PC-3 (cell line): ENCODE measurements at regions of chr6 and their contacts with region 1.

Region 1: DNA sequence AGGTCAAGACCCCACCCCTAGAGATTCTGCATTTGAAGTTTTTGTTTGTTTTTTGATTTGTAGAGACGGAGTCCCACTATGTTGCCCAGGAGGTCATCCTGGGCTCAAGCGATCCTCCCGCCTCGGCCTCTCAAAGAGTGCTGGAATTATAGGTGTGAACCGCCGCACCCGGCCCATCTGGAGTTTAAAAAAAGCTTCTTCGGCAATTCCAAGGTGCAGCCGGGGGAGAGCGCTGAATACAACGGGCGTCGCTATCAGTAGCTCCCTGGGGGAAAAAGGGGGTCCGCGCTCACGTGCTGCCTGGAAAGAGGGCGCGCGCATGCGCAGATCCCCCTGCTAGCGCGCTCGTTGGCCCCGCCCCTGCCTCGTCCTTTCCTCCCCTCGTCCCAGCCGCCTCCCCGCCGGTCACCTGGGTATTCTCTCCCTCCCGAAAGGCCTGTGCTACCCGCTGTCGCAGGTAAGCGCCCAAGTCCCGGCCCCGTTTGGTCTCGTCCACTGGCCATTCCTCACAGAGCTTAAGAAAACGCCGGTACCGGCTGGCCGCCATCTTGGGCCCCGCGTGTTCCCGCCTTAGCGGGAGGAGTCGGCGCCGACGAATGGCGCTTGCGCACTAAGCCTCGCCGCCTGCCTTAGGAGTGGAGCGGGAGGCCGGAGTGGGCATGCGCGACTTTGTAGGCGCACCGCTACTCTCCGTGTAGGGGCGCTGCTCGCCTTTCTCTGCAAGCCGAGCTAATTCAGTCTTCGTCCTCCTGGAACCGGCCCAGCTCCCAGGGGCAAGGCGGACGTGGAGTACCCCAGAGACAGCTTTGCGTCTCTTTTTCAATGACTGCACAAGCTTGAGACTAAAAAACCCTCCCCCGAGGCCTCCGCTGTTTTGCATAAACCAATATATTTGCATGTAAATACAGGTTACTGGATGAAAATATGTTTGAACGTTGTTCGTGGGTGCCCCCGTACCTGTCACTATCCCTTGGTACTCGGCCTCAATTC is at the start of gene UQCC2:
- DNase-seq: peak; percentile 98
- ATAC-seq: peak; percentile 93
- H3K4me3 ChIP-seq: peak within 1 kb of the TSS; percentile 86
- H3K27ac ChIP-seq: peak within 1 kb of the TSS; percentile 90
- H3K4me1 ChIP-seq: peaks cover 24% of the 10 kb centered on the region
- H3K27me3 ChIP-seq: no peaks in the 10 kb centered on the region
- CTCF ChIP-seq: peak; percentile 79
- total RNA-seq, gene UQCC2: 70.0 and 107 TPM in 2 replicates

Region 2: GRCh38 chr6:32668226-32668747 is 1043.1 kb before region 1 on chr6:
- CTCF ChIA-PET with region 1: no interaction called
- POLR2A ChIA-PET with region 1: no interaction called
- intact Hi-C with region 1: no loop called
- DNase-seq: peak; percentile 74
- ATAC-seq: peak; percentile 29; the same call in 1 of the 2 replicates
- H3K4me3 ChIP-seq: no peak overlapping the region
- H3K27ac ChIP-seq: no peak overlapping the region
- H3K4me1 ChIP-seq: no peaks in the 10 kb centered on the region
- H3K27me3 ChIP-seq: peaks cover 35% of the 10 kb centered on the region
- CTCF ChIP-seq: no peak

Region 3: GRCh38 chr6:33375143-33375671 is 336.2 kb before region 1 on chr6:
- CTCF ChIA-PET with region 1: no interaction called
- POLR2A ChIA-PET with region 1: no interaction called
- intact Hi-C with region 1: no loop called
- DNase-seq: peak; percentile 70
- ATAC-seq: peak; percentile 56
- H3K4me3 ChIP-seq: no peak overlapping the region
- H3K27ac ChIP-seq: no peak overlapping the region
- H3K4me1 ChIP-seq: peaks cover 8% of the 10 kb centered on the region; the same call in 1 of the 2 replicates
- H3K27me3 ChIP-seq: no peaks in the 10 kb centered on the region
- CTCF ChIP-seq: no peak

Region 4: GRCh38 chr6:33585403-33586107 is 125.9 kb before region 1 on chr6:
- CTCF ChIA-PET with region 1: interaction called, 10 read pairs
- POLR2A ChIA-PET with region 1: no interaction called
- intact Hi-C with region 1: no loop called
- DNase-seq: peak; percentile 89
- ATAC-seq: peak; percentile 29
- H3K4me3 ChIP-seq: no peak overlapping the region
- H3K27ac ChIP-seq: no peak overlapping the region
- H3K4me1 ChIP-seq: peaks cover 19% of the 10 kb centered on the region
- H3K27me3 ChIP-seq: no peaks in the 10 kb centered on the region
- CTCF ChIP-seq: peak; percentile 97

Region 5: GRCh38 chr6:33620856-33621710 is 90.4 kb before region 1 on chr6 and contains the start of gene ITPR3:
- CTCF ChIA-PET with region 1: no interaction called
- POLR2A ChIA-PET with region 1: no interaction called
- intact Hi-C with region 1: no loop called
- DNase-seq: peak; percentile 80
- ATAC-seq: peak; percentile 56
- H3K4me3 ChIP-seq: peak within 1 kb of the TSS; percentile 99
- H3K27ac ChIP-seq: peak within 1 kb of the TSS; percentile 69
- H3K4me1 ChIP-seq: peaks cover 29% of the 10 kb centered on the region
- H3K27me3 ChIP-seq: no peaks in the 10 kb centered on the region
- CTCF ChIP-seq: no peak
- total RNA-seq, gene ITPR3: 41.8 and 50.6 TPM in 2 replicates

Region 6: GRCh38 chr6:33731751-33732331 is 20.4 kb after region 1 on chr6:
- CTCF ChIA-PET with region 1: interaction called, 10 read pairs
- POLR2A ChIA-PET with region 1: no interaction called
- intact Hi-C with region 1: no loop called
- DNase-seq: peak; percentile 42
- ATAC-seq: peak; percentile 57
- H3K4me3 ChIP-seq: no peak overlapping the region
- H3K27ac ChIP-seq: peak overlapping the region; percentile 31
- H3K4me1 ChIP-seq: peaks cover 17% of the 10 kb centered on the region
- H3K27me3 ChIP-seq: no peaks in the 10 kb centered on the region
- CTCF ChIP-seq: no peak

Region 7: GRCh38 chr6:33744001-33744848 is 32.8 kb after region 1 on chr6:
- CTCF ChIA-PET with region 1: interaction called, 7 read pairs
- POLR2A ChIA-PET with region 1: no interaction called
- intact Hi-C with region 1: loop called (anchors 2 kb)
- DNase-seq: peak; percentile 73
- ATAC-seq: peak; percentile 85
- H3K4me3 ChIP-seq: no peak overlapping the region
- H3K27ac ChIP-seq: no peak overlapping the region
- H3K4me1 ChIP-seq: peaks cover 6% of the 10 kb centered on the region
- H3K27me3 ChIP-seq: no peaks in the 10 kb centered on the region
- CTCF ChIP-seq: peak; percentile 96

Region 8: DNA sequence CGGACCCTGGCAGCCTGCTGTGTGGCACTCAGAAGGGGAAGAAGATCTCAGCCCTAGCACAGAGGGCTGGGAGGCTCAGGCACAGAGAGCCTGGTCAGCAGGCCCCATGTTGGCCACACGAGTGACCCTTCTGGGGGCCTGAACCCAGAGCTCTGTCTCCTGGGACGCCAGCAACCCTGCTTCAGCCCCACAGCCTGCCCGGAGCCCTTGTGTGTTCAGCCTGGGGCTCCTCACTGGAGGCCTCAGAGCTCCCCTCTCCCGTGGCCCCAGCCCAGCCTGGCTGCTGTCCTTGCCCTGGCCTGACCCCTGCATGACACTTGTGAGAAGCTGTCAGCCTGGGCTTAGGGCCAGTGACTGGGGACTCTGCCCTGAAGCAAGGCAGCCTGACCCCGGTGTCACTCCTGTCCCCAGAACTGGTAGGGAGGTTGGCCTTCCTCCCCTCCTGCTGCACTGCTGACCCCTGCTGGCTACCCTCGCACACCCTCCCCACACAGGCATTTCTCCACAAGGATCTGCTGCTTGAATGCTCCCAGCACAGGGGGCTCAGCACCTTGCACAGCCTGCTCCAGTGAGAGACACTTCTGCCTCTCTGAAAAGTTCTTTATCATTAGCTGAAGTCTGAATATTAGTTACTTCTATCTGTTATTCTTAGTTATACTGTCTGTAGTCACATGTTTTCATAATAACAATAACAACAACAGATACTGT is 50.6 kb after region 1 on chr6:
- CTCF ChIA-PET with region 1: interaction called, 13 read pairs
- POLR2A ChIA-PET with region 1: no interaction called
- intact Hi-C with region 1: loop called (anchors 1 kb)
- DNase-seq: peak; percentile 59
- ATAC-seq: peak; percentile 45
- H3K4me3 ChIP-seq: no peak overlapping the region
- H3K27ac ChIP-seq: no peak overlapping the region
- H3K4me1 ChIP-seq: peaks cover 15% of the 10 kb centered on the region
- H3K27me3 ChIP-seq: no peaks in the 10 kb centered on the region
- CTCF ChIP-seq: peak; percentile 80

Region 9: GRCh38 chr6:33781114-33781975 is 69.9 kb after region 1 on chr6:
- CTCF ChIA-PET with region 1: interaction called, 12 read pairs
- POLR2A ChIA-PET with region 1: no interaction called
- intact Hi-C with region 1: no loop called
- DNase-seq: peak; percentile 79
- ATAC-seq: peak; percentile 92
- H3K4me3 ChIP-seq: no peak overlapping the region
- H3K27ac ChIP-seq: peak overlapping the region; percentile 21; the same call in 1 of the 2 replicates
- H3K4me1 ChIP-seq: peaks cover 31% of the 10 kb centered on the region
- H3K27me3 ChIP-seq: no peaks in the 10 kb centered on the region
- CTCF ChIP-seq: no peak

Region 10: GRCh38 chr6:34027445-34027936 is 316.1 kb after region 1 on chr6:
- CTCF ChIA-PET with region 1: interaction called, 11 read pairs
- POLR2A ChIA-PET with region 1: no interaction called
- intact Hi-C with region 1: no loop called
- DNase-seq: peak; percentile 54
- ATAC-seq: peak; percentile 74
- H3K4me3 ChIP-seq: no peak overlapping the region
- H3K27ac ChIP-seq: no peak overlapping the region
- H3K4me1 ChIP-seq: no peaks in the 10 kb centered on the region
- H3K27me3 ChIP-seq: 0 out of 2 replicates have a peak, but pooled peaks cover 12% of the 10 kb centered on the region
- CTCF ChIP-seq: peak; percentile 87